Heart right ventricle (tissue), 16 donors: ENCODE measurements at regions of chr9 and their contacts with region 1.

Region 1: GRCh38 chr9:3719286-3719685 is 193.5 kb upstream of the RFX3 start:
- DNase-seq: no peak
- ATAC-seq: peak in 1 of 8 donors; percentile 35
- H3K4me3 ChIP-seq: no peak overlapping the region
- H3K27ac ChIP-seq: no peak overlapping the region
- H3K4me1 ChIP-seq: no peaks in the 10 kb centered on the region
- H3K27me3 ChIP-seq: no peaks in the 10 kb centered on the region
- CTCF ChIP-seq: no peak

Region 2: DNA sequence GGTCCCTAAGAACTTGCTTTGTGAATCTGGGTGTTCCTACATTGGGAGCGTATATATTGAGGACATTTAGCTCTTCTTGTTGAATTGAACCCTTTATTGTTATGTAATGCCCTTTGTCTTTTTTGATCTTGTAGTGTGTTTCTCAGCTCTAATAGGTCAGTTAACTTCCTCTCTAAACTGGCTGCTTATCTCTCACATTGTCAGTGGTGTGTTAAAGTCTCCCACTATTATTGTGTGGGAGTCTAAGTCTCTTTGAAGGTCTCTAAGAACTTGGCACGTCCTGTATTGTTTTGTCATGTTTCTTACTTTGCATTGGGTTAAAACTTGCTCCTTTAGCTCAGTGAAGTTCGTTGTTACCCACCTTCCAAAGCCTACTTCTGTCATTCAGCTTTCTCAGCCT is 1945.8 kb after region 1 on chr9:
- intact Hi-C with region 1: loop called in 1 of 10 experiments (anchors 5 kb)
- DNase-seq: no peak
- ATAC-seq: peak in 3 of 8 donors; percentile 31 to 56 (median 42)
- H3K4me3 ChIP-seq: no peak overlapping the region
- H3K27ac ChIP-seq: no peak overlapping the region
- H3K4me1 ChIP-seq: peaks cover 0 to 13% (median 4%) of the 10 kb centered on the region in 9 donors
- H3K27me3 ChIP-seq: no peaks in the 10 kb centered on the region
- CTCF ChIP-seq: no peak